SK-N-SH (cell line): ENCODE measurements at regions of chr15 and their contacts with region 1.

Region 1: DNA sequence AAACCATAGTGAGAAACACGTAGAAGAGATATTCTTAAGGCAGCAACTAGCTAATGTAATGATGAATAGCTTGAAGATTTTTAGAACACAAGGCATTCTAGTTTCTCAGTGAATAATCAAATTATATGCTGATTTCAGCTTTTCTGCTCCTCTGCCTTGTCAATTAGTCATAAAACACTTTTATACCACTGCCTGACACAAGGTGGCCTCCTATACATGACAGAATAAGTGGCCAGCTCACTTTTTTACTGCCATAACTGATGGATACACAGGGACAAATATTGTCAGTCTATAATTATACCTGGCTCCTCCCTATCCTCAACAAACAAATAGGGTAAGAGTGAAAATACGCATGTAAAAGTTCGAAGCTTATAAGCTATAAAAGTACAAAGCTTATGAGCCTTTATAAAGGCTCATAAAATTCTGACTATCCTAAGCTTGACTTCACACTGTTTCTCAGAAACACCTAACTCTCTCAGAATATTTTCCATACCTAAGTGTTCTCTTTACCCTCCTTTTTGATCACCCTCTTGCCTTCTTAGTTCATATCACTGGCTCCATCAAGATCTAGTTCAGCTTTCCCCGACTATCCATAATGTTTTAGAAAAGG is 81.6 kb downstream of the HERC1 start:
- DNase-seq: peak; percentile 54
- H3K4me3 ChIP-seq: no peak overlapping the region; a peak in 1 of 4 replicates
- H3K27ac ChIP-seq: no peak overlapping the region
- H3K4me1 ChIP-seq: no peaks in the 10 kb centered on the region; a peak in 1 of 4 replicates
- H3K27me3 ChIP-seq: no peaks in the 10 kb centered on the region
- CTCF ChIP-seq: peak; percentile 83
- EP300 ChIP-seq: no peak
- RAD21 ChIP-seq: peak; percentile 94

Region 2: DNA sequence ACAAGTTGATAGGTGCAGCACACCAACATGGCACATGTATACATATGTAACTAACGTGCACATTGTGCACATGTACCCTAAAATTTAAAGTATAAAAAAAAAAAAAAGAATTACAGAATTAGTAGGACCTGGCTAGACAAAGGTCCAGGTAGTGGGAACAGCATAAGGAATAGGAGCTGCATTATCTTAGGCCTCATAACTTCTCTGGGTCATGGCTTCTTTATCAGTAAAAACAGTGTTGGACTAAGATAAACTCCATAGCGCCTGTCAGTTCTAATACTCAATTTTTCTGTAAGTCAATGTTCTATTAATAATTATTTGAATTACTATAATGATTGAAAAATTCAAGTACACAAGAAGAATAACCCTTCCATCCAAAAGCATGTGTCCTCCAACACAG is 16.7 kb before region 1 on chr15:
- CTCF ChIA-PET with region 1: interaction called, 10 read pairs
- POLR2A ChIA-PET with region 1: interaction called, 3 read pairs
- DNase-seq: no peak
- H3K4me3 ChIP-seq: no peak overlapping the region
- H3K27ac ChIP-seq: no peak overlapping the region
- H3K4me1 ChIP-seq: no peaks in the 10 kb centered on the region
- H3K27me3 ChIP-seq: no peaks in the 10 kb centered on the region
- CTCF ChIP-seq: no peak
- EP300 ChIP-seq: no peak
- RAD21 ChIP-seq: no peak

Region 3: GRCh38 chr15:63772520-63772919 is 20.3 kb after region 1 on chr15:
- CTCF ChIA-PET with region 1: interaction called, 33 read pairs
- POLR2A ChIA-PET with region 1: no interaction called
- DNase-seq: no peak
- H3K4me3 ChIP-seq: no peak overlapping the region
- H3K27ac ChIP-seq: no peak overlapping the region
- H3K4me1 ChIP-seq: no peaks in the 10 kb centered on the region
- H3K27me3 ChIP-seq: no peaks in the 10 kb centered on the region
- CTCF ChIP-seq: no peak
- EP300 ChIP-seq: no peak
- RAD21 ChIP-seq: no peak

Region 4: GRCh38 chr15:63783441-63783840 is 31.3 kb after region 1 on chr15:
- CTCF ChIA-PET with region 1: no interaction called
- POLR2A ChIA-PET with region 1: no interaction called
- DNase-seq: no peak
- H3K4me3 ChIP-seq: no peak overlapping the region
- H3K27ac ChIP-seq: no peak overlapping the region
- H3K4me1 ChIP-seq: no peaks in the 10 kb centered on the region; a peak in 2 of 4 replicates
- H3K27me3 ChIP-seq: no peaks in the 10 kb centered on the region
- CTCF ChIP-seq: no peak
- EP300 ChIP-seq: no peak
- RAD21 ChIP-seq: no peak

Region 5: DNA sequence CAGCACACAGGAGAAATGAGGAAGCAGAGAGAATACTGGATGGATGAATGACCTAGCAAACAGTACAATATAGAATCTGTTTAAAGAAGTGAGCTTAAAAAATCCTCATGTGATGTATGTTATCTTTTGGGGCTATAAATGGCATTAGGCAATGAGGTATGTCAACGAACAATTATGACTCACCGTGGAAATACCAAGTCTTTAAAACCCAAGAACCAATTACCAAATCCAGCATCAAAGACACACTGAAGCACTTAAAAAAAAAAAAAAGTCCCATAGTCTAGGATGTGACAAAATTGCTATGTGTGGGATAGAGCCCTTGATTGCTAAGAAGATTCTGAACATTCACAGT is 117.8 kb after region 1 on chr15:
- CTCF ChIA-PET with region 1: interaction called, 10 read pairs
- POLR2A ChIA-PET with region 1: no interaction called
- DNase-seq: no peak
- H3K4me3 ChIP-seq: no peak overlapping the region
- H3K27ac ChIP-seq: no peak overlapping the region
- H3K4me1 ChIP-seq: no peaks in the 10 kb centered on the region
- H3K27me3 ChIP-seq: no peaks in the 10 kb centered on the region
- CTCF ChIP-seq: no peak
- EP300 ChIP-seq: no peak
- RAD21 ChIP-seq: no peak

Region 6: DNA sequence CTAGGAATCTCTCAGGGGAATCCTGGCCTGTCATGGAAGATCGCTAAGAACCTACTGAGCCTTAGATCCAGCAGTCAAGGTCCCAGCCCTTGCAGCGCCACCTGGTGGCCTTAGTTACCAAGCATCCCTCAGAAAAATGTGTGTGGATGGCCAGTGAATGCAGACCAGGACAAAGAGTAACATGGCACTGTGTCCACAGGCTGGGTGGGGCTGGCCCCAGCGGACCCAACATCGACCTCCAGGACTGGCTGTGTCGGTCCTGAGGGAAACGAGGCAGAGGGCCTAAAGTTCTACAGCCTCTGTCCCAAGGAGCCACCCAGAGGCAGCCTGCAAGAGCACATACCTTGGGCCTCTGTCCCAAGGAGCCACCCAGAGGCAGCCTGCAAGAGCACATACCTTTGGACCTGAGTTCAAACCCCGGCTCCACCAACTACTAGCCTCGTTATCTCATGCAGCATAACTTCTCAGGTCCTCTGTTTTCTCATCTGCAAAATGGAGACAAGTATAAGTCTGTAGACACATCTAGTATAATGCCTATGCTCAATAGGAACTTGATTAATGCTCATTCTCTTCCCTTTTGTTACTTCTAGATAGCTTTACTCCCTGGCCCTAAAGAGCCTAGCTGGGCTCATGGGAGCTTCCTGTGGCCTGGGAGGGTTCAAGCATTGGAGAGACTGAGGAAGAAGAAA is 139.0 kb after region 1 on chr15:
- CTCF ChIA-PET with region 1: interaction called, 146 read pairs
- POLR2A ChIA-PET with region 1: no interaction called
- DNase-seq: peak; percentile 80
- H3K4me3 ChIP-seq: no peak overlapping the region; a peak in 1 of 4 replicates
- H3K27ac ChIP-seq: no peak overlapping the region
- H3K4me1 ChIP-seq: no peaks in the 10 kb centered on the region; a peak in 1 of 4 replicates
- H3K27me3 ChIP-seq: no peaks in the 10 kb centered on the region
- CTCF ChIP-seq: peak; percentile 90
- EP300 ChIP-seq: no peak
- RAD21 ChIP-seq: peak; percentile 80

Region 7: GRCh38 chr15:63945007-63945788 is 193.0 kb after region 1 on chr15:
- CTCF ChIA-PET with region 1: interaction called, 22 read pairs
- POLR2A ChIA-PET with region 1: no interaction called
- DNase-seq: peak; percentile 84
- H3K4me3 ChIP-seq: no peak overlapping the region; a peak in 1 of 4 replicates
- H3K27ac ChIP-seq: no peak overlapping the region
- H3K4me1 ChIP-seq: peaks cover 0 to 12% of the 10 kb centered on the region in 2 experiments; a peak in 1 of 4 replicates
- H3K27me3 ChIP-seq: no peaks in the 10 kb centered on the region
- CTCF ChIP-seq: peak; percentile 92
- EP300 ChIP-seq: no peak
- RAD21 ChIP-seq: peak; percentile 58

Region 8: GRCh38 chr15:64010719-64011118 is 258.5 kb after region 1 on chr15:
- CTCF ChIA-PET with region 1: no interaction called
- POLR2A ChIA-PET with region 1: no interaction called
- DNase-seq: no peak
- H3K4me3 ChIP-seq: no peak overlapping the region
- H3K27ac ChIP-seq: no peak overlapping the region
- H3K4me1 ChIP-seq: peaks cover 12 to 13% of the 10 kb centered on the region in 2 experiments
- H3K27me3 ChIP-seq: no peaks in the 10 kb centered on the region
- CTCF ChIP-seq: no peak
- EP300 ChIP-seq: no peak
- RAD21 ChIP-seq: no peak

Region 9: DNA sequence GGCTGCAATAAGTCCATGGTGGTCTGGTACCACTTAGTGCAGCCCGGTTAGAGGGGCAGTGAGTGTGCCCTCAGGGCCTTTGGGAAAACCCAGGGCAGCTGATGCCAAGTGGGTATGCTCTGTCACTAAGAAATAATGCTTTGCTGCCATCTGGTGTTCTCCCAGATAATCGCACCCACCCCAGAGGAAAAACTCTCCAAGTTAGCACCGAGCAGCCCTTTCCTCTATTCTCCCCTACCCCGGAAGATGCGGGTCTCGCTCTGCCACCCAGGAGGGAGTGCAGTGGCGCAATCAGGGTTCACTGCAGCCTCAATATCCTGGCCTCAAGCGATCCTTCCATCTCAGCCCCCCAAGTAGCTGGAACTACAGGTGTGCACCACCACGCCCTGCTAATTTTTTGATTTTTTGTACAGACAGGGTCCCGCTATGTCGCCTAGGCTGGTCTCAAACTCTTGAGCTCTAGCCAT is 315.4 kb after region 1 on chr15:
- CTCF ChIA-PET with region 1: interaction called, 94 read pairs
- POLR2A ChIA-PET with region 1: no interaction called
- DNase-seq: peak; percentile 90
- H3K4me3 ChIP-seq: no peak overlapping the region; a peak in 1 of 4 replicates
- H3K27ac ChIP-seq: no peak overlapping the region
- H3K4me1 ChIP-seq: peaks cover 0 to 14% of the 10 kb centered on the region in 2 experiments; a peak in 2 of 4 replicates
- H3K27me3 ChIP-seq: no peaks in the 10 kb centered on the region
- CTCF ChIP-seq: peak; percentile 76
- EP300 ChIP-seq: peak in 1 of 2 experiments; percentile 63; a peak in 2 of 4 replicates
- RAD21 ChIP-seq: peak; percentile 95